ENCODE measurements at regions of chr10 and their contacts with region 1.

Region 1: DNA sequence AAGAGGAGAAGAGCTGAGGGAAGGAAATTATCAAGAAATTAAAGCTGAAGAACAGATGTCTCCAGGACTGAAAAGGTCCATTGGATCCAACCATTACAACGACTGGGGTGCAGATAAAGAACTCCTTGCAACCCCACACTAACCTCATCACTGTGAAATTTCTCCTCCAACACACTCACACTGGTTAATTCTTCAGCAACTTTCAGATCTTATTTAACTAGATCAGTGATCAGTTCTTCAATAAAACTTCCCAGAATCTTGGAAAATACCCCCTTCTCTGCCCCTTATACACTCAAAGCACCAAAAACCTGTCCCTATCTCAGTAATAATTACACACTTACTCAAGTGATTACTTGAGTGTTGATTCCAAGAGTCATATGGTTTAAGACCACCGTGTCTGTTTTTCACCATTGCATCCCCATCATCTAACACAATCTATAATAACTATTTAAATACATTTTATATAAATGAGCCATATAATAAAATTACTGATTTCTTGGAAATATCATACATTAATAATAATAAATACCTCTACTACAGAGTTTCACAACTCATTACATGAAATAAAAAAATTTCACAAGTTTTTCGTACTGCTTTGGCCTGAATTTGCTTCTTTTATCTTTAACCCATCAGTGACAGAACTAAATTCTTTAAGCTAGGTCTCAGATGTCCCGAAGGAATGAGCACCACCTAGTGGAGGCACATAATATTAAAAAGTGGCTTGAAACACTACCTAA is 123.7 kb downstream of the MPP7 start:
- DNase-seq: peak; percentile 14
- H3K4me3 Mint-ChIP-seq: peak overlapping the region; percentile 43
- H3K27ac Mint-ChIP-seq: peak overlapping the region; percentile 88
- H3K4me1 Mint-ChIP-seq: peaks cover 20% of the 10 kb centered on the region
- H3K27me3 Mint-ChIP-seq: peaks cover 12% of the 10 kb centered on the region

Region 2: GRCh38 chr10:27369880-27370279 is 809.3 kb before region 1 on chr10:
- intact Hi-C with region 1: loop called (anchors 2 kb)
- DNase-seq: no peak
- H3K4me3 Mint-ChIP-seq: no peak overlapping the region
- H3K27ac Mint-ChIP-seq: no peak overlapping the region
- H3K4me1 Mint-ChIP-seq: peaks cover 4% of the 10 kb centered on the region
- H3K27me3 Mint-ChIP-seq: peaks cover 6% of the 10 kb centered on the region

Region 3: GRCh38 chr10:27558612-27559020 is 620.6 kb before region 1 on chr10:
- intact Hi-C with region 1: loop called (anchors 2 kb)
- DNase-seq: peak; percentile 5
- H3K4me3 Mint-ChIP-seq: no peak overlapping the region
- H3K27ac Mint-ChIP-seq: no peak overlapping the region
- H3K4me1 Mint-ChIP-seq: no peaks in the 10 kb centered on the region
- H3K27me3 Mint-ChIP-seq: peaks cover 4% of the 10 kb centered on the region

Region 4: DNA sequence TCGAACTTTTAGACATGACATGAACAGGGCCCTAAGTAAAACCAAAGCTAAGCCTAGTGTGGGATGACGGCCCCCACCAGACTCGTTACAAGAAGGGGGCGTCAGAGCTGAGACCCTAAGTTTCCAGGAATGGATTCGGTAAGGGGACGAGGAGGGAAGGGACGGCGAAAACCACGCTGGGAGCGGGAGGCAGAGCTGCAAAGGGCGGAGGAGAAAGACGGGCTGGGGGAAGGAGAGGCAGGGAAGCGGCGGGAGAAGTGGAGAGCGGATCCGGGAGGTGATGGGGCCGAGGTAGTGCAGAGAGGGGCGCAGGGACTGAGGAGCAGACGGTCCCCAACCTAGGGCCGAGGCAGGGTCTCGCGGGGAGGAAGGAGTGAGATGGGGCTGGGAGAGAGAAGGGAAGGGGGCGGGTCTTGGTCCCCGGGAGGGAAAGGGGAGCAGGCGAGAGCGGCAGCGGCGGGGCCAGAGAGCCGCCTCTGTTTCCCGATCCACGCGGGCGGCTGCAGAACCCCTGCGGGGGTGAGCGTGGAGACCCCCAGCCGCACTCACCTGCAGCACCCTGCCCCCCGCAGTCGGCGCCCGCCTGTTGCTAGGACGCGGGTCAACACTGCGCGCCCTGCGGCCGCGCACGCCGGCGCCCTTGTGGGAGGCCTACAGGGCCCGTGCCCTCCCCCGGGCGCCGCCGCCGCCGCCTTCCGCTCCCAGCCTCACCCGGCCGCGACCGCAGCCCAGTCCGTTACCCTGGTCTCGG is 180.7 kb before region 1 on chr10:
- intact Hi-C with region 1: loop called (anchors 5 kb)
- DNase-seq: no peak
- H3K4me3 Mint-ChIP-seq: peak overlapping the region; percentile 74
- H3K27ac Mint-ChIP-seq: no peak overlapping the region
- H3K4me1 Mint-ChIP-seq: peaks cover 14% of the 10 kb centered on the region
- H3K27me3 Mint-ChIP-seq: peaks cover 48% of the 10 kb centered on the region

Region 5: GRCh38 chr10:28381903-28382347 is 202.8 kb after region 1 on chr10:
- intact Hi-C with region 1: loop called (anchors 2 kb)
- DNase-seq: peak; percentile 58
- H3K4me3 Mint-ChIP-seq: no peak overlapping the region
- H3K27ac Mint-ChIP-seq: no peak overlapping the region
- H3K4me1 Mint-ChIP-seq: peaks cover 24% of the 10 kb centered on the region
- H3K27me3 Mint-ChIP-seq: peaks cover 22% of the 10 kb centered on the region

Measured in activated T-helper 1 cell treated with anti-CD3 and anti-CD28 coated beads, Interleukin-12 subunit alpha, Interleukin-12 subunit beta, Interleukin-2, Interleukin-4 antibody, amounts not matched to agents 30 ng/mL and 10 ng/mL and 1 ng/mL, durations not matched to agents 14 hours and 24 hours and 36 hours (primary cell).